MCF 10A (cell line): ENCODE measurements at regions of chr5 and their contacts with region 1.

Region 1: GRCh38 chr5:107673368-107674136 is 2.8 kb upstream of the EFNA5 start:
- DNase-seq: peak; percentile 95
- H3K4me3 Mint-ChIP-seq: peak overlapping the region; percentile 84
- H3K27ac Mint-ChIP-seq: peak overlapping the region; percentile 93
- H3K4me1 Mint-ChIP-seq: peaks cover 20% of the 10 kb centered on the region
- H3K27me3 Mint-ChIP-seq: no peaks in the 10 kb centered on the region
- CTCF ChIP-seq: peak; percentile 96

Region 2: DNA sequence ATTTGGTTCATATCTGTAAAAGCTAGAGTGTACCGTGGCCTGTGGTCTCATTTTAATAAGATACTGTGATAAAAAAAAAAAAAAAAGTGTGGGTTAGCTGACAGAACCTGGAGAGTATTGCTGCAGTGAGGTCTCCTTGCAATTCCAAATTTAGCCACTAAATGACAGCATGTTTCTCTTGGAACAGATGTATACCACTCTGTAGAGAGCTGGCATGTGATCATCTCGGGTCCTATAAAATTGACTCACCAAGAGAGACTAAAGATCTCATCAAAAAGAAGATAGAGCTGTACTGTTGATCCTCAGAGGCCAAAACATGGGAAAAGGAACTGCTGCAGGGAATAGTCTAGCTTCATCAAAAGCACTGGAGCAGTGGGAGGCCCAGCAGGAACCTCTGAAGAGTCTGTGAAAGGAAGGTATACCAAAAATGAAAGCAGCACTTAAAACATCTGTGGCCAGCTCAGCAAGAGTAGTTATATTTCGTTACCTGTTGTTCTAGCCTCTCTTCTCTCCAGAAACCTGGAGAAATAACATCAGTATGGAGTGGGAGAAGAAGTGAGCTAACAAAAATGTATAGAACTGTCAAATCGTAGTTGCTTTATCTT is 829.6 kb before region 1 on chr5:
- CTCF ChIA-PET with region 1: interaction called, 4 read pairs
- POLR2A ChIA-PET with region 1: no interaction called
- intact Hi-C with region 1: loop called (anchors 5 kb)
- DNase-seq: peak; percentile 32
- H3K4me3 Mint-ChIP-seq: no peak overlapping the region
- H3K27ac Mint-ChIP-seq: peak overlapping the region; percentile 4
- H3K4me1 Mint-ChIP-seq: peaks cover 5% of the 10 kb centered on the region
- H3K27me3 Mint-ChIP-seq: peaks cover 10% of the 10 kb centered on the region
- CTCF ChIP-seq: peak; percentile 26

Region 3: GRCh38 chr5:107248066-107248695 is 425.4 kb before region 1 on chr5:
- CTCF ChIA-PET with region 1: interaction called, 3 read pairs
- POLR2A ChIA-PET with region 1: no interaction called
- intact Hi-C with region 1: loop called (anchors 2 kb)
- DNase-seq: peak; percentile 67
- H3K4me3 Mint-ChIP-seq: no peak overlapping the region
- H3K27ac Mint-ChIP-seq: no peak overlapping the region
- H3K4me1 Mint-ChIP-seq: no peaks in the 10 kb centered on the region
- H3K27me3 Mint-ChIP-seq: no peaks in the 10 kb centered on the region
- CTCF ChIP-seq: peak; percentile 72

Region 4: GRCh38 chr5:107389130-107389774 is 284.3 kb before region 1 on chr5:
- CTCF ChIA-PET with region 1: no interaction called
- POLR2A ChIA-PET with region 1: interaction called, 7 read pairs
- intact Hi-C with region 1: loop called (anchors 2 kb)
- DNase-seq: peak; percentile 67
- H3K4me3 Mint-ChIP-seq: no peak overlapping the region
- H3K27ac Mint-ChIP-seq: peak overlapping the region; percentile 75
- H3K4me1 Mint-ChIP-seq: peaks cover 45% of the 10 kb centered on the region
- H3K27me3 Mint-ChIP-seq: no peaks in the 10 kb centered on the region
- CTCF ChIP-seq: no peak

Region 5: GRCh38 chr5:107469485-107470294 is 203.9 kb before region 1 on chr5:
- CTCF ChIA-PET with region 1: interaction called, 3 read pairs
- POLR2A ChIA-PET with region 1: interaction called, 6 read pairs
- intact Hi-C with region 1: loop called (anchors 2 kb)
- DNase-seq: peak; percentile 94
- H3K4me3 Mint-ChIP-seq: peak overlapping the region; percentile 47
- H3K27ac Mint-ChIP-seq: peak overlapping the region; percentile 93
- H3K4me1 Mint-ChIP-seq: peaks cover 77% of the 10 kb centered on the region
- H3K27me3 Mint-ChIP-seq: no peaks in the 10 kb centered on the region
- CTCF ChIP-seq: no peak

Region 6: GRCh38 chr5:107580889-107581820 is 92.4 kb before region 1 on chr5:
- CTCF ChIA-PET with region 1: interaction called, 3 read pairs
- POLR2A ChIA-PET with region 1: interaction called, 205 read pairs
- intact Hi-C with region 1: no loop called
- DNase-seq: peak; percentile 80
- H3K4me3 Mint-ChIP-seq: peak overlapping the region; percentile 61
- H3K27ac Mint-ChIP-seq: peak overlapping the region; percentile 74
- H3K4me1 Mint-ChIP-seq: peaks cover 42% of the 10 kb centered on the region
- H3K27me3 Mint-ChIP-seq: no peaks in the 10 kb centered on the region
- CTCF ChIP-seq: no peak

Region 7: DNA sequence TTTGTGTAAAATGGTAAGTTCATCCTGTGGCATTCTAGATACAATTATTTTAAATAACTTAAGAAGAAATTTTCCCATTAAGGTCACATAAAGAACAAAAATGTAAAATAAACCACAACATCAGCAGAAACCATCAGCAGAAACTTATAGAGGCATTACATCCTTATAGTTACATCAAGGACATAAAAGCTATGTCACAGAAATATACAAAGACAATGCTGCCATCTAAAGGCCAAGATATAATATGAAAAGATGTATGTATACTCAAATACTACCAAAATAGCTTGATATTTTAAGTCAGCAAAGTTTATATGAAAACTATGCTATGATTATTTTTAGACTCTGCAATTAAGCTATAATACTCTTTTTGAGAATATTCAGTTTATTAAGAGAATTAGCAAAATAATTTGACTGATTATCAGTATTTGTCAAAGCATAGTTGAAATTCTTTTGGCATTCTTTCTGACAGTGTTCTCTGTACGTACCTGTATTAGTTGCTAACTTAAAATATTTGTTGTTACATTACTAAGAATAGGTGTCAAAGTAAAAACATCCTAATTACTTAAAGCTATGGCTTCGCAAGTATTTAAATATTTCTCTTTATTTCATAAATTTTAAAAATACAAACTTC is 672.1 kb after region 1 on chr5:
- CTCF ChIA-PET with region 1: interaction called, 4 read pairs
- POLR2A ChIA-PET with region 1: no interaction called
- intact Hi-C with region 1: loop called (anchors 1 kb)
- DNase-seq: peak; percentile 59
- H3K4me3 Mint-ChIP-seq: no peak overlapping the region
- H3K27ac Mint-ChIP-seq: no peak overlapping the region
- H3K4me1 Mint-ChIP-seq: no peaks in the 10 kb centered on the region
- H3K27me3 Mint-ChIP-seq: no peaks in the 10 kb centered on the region
- CTCF ChIP-seq: peak; percentile 38